ENCODE measurements at regions of chr5 and their contacts with region 1.

Region 1: DNA sequence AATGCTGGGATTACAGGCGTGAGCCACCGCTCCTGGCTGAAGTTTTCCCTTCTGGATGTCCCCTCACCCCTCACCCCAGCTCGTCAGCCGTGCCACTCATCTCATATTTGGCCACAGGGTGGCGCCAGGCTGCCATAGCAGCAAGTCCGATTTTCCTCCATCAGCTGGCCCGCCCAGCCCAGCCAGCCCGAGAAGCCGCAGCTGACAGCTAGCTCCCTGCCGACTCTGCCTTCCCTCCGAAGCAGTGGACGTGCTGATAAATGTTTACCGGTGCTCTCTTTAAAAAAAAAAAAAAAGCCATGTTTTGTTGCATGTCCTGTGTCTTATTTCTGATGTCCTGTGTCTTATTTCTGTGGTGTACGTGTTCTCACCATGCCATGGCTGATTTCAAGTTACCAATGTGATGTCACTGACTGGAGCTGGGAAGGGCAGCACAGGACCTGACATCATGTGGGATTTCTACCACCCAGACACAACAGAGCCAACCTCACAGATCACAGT is 58.3 kb downstream of the PFDN1 start:
- DNase-seq: peak; percentile 94

Region 2: GRCh38 chr5:140182803-140183367 is 61.7 kb before region 1 on chr5:
- intact Hi-C with region 1: loop called (anchors 5 kb)
- DNase-seq: no peak

Region 3: GRCh38 chr5:140273401-140273877 is 28.9 kb after region 1 on chr5:
- intact Hi-C with region 1: no loop called
- DNase-seq: no peak

Region 4: GRCh38 chr5:140287801-140288521 is 43.4 kb after region 1 on chr5:
- intact Hi-C with region 1: loop called (anchors 5 kb)
- DNase-seq: no peak

Region 5: GRCh38 chr5:140346348-140347101 is 102.0 kb after region 1 on chr5 and contains the start of gene HBEGF:
- intact Hi-C with region 1: loop called (anchors 1 kb)
- DNase-seq: peak; percentile 94
- total RNA-seq, gene HBEGF: 73.9 TPM

Region 6: DNA sequence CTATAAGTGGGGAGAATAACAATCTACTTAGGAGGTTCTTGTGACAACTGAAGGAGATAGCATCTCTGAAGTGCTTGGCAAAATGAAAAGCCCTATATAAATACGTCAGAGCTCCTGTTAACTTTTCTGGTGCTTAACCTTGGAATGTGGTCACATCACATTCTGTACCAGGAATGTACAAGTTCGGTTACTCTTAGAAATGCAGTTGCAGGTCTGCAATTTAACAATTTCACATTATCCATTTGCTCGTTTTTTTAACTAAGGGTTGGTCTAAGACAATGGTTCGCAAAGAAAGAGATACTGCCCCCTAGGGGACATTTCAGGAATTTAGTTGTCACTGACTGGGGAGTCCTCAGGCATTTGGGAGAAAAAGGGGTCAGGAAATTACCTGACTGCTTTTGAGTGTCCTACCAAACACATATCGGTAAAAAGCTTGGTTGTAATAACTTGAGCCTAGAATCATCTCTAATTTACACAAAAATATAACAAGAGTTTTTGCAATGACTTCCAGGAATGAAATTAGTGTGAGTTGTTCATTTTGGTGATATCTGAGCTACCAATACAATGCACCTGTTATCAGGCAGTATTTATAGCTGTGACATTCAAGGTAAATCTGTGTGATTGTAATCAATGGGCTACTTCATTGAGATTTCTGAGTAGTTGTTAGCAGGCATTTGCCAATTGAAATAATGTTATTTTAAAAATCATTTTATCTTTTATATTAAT is 107.2 kb after region 1 on chr5:
- intact Hi-C with region 1: loop called (anchors 1 kb)
- DNase-seq: no peak